ENCODE measurements at regions of chr2 and their contacts with region 1.

Region 1: GRCh38 chr2:27663463-27664249 is at the starts of genes SLC4A1AP and SUPT7L:
- H3K4me3 Mint-ChIP-seq: peak within 1 kb of the TSS; percentile 90
- H3K27ac Mint-ChIP-seq: peak within 1 kb of the TSS; percentile 93
- H3K4me1 Mint-ChIP-seq: peaks cover 38% of the 10 kb centered on the region
- H3K27me3 Mint-ChIP-seq: no peaks in the 10 kb centered on the region

Region 2: GRCh38 chr2:27628767-27629709 is 34.6 kb before region 1 on chr2 and contains the starts of genes CCDC121 and GPN1:
- intact Hi-C with region 1: loop called (anchors 2 kb)
- H3K4me3 Mint-ChIP-seq: no peak within 1 kb of the TSS
- H3K27ac Mint-ChIP-seq: no peak within 1 kb of the TSS
- H3K4me1 Mint-ChIP-seq: no peaks in the 10 kb centered on the region
- H3K27me3 Mint-ChIP-seq: no peaks in the 10 kb centered on the region

Region 3: DNA sequence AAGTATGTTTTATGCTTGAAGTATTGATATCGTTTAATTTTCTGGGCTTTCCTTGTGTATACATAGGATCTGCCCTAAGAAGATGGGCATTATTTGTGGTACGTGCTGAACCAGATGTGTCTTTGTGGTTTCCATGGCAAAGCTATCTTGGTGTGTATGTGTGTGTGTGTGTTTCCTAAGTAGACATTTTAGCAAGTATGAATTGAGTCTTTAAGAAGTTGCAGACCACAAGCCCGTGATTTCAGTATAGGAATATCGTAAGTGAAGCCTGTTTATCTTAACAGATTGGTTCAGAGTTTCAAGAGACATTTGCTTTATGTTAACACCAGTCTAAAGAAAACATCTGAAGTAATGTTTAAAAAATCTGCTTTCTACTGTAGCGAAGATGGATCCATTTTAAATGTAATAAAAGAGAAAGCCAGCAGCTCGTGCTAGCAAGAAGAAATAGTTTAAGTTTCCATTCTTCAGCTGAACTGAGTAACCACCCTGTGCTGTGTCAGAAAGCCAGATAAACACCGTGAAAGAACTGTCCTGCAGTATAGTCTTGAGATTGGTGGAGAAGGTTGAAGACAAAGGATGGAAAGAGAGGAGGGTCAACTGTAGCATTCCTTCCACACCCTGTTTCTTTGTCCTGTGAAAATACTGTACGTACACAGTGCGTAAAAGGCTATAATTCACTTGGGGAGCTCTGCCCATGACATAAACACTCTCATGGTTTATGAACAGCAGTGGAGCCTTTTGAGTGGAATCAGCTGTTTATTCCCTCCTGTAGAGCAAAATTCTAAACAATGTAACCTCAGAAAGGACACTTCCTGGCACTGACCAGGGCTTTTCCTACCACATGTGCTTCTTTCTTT is 637.1 kb after region 1 on chr2:
- intact Hi-C with region 1: no loop called
- H3K4me3 Mint-ChIP-seq: no peak overlapping the region
- H3K27ac Mint-ChIP-seq: no peak overlapping the region
- H3K4me1 Mint-ChIP-seq: no peaks in the 10 kb centered on the region
- H3K27me3 Mint-ChIP-seq: no peaks in the 10 kb centered on the region

Measured in dendritic cell treated with granulocyte-macrophage colony-stimulating factor and Interleukin-4, amounts not matched to agents 40 ng/mL and 50 ng/mL, for 4 days (primary cell).